Activated CD4-positive, alpha-beta T cell treated with anti-CD3 and anti-CD28 coated beads, Interleukin-2, amount 10 ng/mL, durations not matched to agents 24 days and 14 days (primary cell): ENCODE measurements at regions of chr12 and their contacts with region 1.

Region 1: GRCh38 chr12:3752741-3753486 is at the start of gene CRACR2A:
- DNase-seq: peak; percentile 96
- H3K4me3 Mint-ChIP-seq: peak within 1 kb of the TSS; percentile 90
- H3K27ac Mint-ChIP-seq: peak within 1 kb of the TSS; percentile 98
- H3K4me1 Mint-ChIP-seq: peaks cover 47% of the 10 kb centered on the region
- H3K27me3 Mint-ChIP-seq: no peaks in the 10 kb centered on the region
- total RNA-seq, gene CRACR2A: 26.6 and 27.0 TPM in 2 replicates

Region 2: GRCh38 chr12:2794736-2795289 is 958.1 kb before region 1 on chr12 and contains the start of gene FKBP4:
- intact Hi-C with region 1: loop called (anchors 10 kb)
- DNase-seq: peak; percentile 97
- H3K4me3 Mint-ChIP-seq: peak within 1 kb of the TSS; percentile 86
- H3K27ac Mint-ChIP-seq: peak within 1 kb of the TSS; percentile 79
- H3K4me1 Mint-ChIP-seq: peaks cover 28% of the 10 kb centered on the region
- H3K27me3 Mint-ChIP-seq: peaks cover 19% of the 10 kb centered on the region
- total RNA-seq, gene FKBP4: 300 and 311 TPM in 2 replicates

Region 3: DNA sequence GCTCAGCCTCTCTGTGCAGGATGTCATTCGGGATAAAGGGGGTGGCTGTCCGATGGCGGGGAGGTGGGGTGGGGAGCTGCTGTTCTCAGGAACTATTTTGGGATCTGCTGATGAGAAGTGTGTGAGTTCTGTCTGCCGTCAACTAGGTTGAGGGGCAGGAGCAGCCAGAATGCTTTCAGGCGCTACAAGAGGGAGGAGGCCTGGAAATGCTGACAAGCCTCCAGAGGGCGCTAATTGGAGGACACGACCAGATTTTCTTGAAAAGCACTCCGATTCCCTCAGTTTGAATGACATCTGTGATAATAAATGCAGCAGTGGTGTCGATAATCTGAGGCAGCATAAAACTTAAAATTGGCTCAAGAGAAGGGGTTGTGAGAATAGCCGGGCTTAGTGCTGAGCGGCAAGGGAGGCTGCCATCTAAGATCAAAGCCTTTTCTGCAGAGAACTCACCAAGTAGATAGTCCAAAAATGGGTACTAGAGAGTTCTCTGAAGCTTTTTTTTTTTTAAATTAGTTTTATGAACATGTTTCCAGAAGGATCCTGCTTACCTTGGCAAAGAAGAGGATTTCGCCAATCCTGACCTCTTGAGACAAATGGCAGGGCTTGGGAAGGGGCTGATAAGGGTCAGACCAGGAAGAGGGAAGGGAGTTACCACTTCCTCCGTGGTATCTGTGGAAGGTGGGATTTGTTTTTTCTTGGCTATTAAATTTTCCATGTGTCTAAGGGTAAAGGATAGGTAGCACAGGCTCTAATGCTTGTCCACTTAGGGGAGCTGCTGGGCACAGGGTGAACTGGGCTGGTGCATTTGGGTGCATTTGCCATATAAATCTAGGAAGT is 94.4 kb before region 1 on chr12:
- intact Hi-C with region 1: loop called (anchors 5 kb)
- DNase-seq: peak; percentile 78
- H3K4me3 Mint-ChIP-seq: no peak overlapping the region
- H3K27ac Mint-ChIP-seq: no peak overlapping the region
- H3K4me1 Mint-ChIP-seq: no peaks in the 10 kb centered on the region
- H3K27me3 Mint-ChIP-seq: no peaks in the 10 kb centered on the region

Region 4: DNA sequence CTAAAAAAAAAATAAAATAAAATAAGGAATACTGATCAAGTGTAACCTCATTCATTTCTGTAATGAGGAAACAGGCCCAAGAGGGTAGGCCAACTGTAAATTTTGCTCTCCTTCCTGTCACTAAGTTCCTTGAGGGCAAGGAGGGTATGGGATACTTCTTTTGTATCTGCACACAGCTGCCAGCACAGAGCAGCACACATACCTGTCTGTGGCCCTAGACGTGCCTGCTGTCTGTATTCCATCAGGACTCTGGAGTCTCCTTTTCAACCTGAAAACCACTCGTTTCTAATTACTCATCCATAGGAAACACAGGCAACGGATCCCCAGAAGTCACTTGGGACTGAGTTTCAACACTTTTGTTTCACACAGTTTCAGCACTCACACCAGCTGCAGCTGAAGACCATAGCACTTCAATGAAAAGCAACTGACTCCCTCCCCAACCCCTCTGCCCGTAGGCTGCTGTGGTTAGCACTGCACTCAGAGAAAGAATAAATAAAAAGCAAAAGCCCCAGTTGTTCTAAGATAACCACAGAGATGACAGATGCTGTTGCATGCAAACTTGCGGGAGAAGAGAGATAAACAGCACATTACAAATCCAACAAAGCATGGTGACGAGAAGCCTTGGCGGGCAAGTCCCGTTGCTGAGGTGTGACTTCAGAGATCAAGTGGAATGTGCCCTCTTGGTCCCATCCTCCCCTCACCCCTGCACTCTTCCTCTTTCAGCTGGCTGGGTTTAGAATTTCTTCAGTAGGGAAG is 24.9 kb before region 1 on chr12:
- intact Hi-C with region 1: loop called (anchors 1 kb)
- DNase-seq: peak; percentile 88
- H3K4me3 Mint-ChIP-seq: peak overlapping the region; percentile 82
- H3K27ac Mint-ChIP-seq: peak overlapping the region; percentile 93
- H3K4me1 Mint-ChIP-seq: peaks cover 35% of the 10 kb centered on the region
- H3K27me3 Mint-ChIP-seq: no peaks in the 10 kb centered on the region

Region 5: GRCh38 chr12:4648501-4649357 is 895.8 kb after region 1 on chr12 and contains the starts of genes AKAP3 and NDUFA9:
- intact Hi-C with region 1: loop called (anchors 2 kb)
- DNase-seq: peak; percentile 94
- H3K4me3 Mint-ChIP-seq: peak within 1 kb of the TSS; percentile 98
- H3K27ac Mint-ChIP-seq: peak within 1 kb of the TSS; percentile 96
- H3K4me1 Mint-ChIP-seq: peaks cover 36% of the 10 kb centered on the region
- H3K27me3 Mint-ChIP-seq: peaks cover 5% of the 10 kb centered on the region
- total RNA-seq, gene AKAP3: 0.42 and 1.1 TPM in 2 replicates
- total RNA-seq, gene NDUFA9: 130 and 139 TPM in 2 replicates